Left cardiac atrium (tissue), 4 donors: ENCODE measurements at regions of chr2 and their contacts with region 1.

Region 1: DNA sequence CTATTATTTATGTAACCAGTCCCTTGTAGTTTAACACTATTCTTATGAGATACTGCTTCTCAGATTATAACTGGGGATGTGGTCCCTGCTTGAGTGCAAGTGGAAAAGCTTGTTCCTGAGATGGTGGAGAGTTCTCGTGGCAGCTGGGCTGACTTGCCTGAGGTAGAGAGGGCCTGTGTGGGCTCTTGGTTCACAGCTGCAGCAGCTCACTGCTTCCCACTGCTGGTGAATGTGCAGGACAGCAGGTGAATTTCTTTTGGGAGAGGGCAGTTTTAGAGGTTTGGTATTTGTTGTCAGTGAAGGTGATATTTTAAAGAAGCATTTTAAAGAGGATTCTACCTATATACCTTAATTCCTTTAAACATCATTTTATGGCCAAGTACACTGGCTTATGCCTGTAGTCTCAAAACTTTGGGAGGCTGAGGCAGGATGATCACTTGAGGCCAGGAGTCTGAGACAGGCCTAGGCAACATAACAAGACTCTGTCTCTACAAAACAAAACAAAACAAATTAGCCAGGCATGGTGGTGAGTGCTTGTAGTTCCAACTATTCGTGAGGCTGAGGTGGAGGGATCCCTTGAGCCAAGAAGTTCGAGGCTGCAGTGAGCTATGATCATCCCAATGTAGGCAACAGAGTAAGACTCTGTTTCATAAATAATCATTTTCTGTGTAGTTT is 94.8 kb downstream of the MTA3 start:
- DNase-seq: peak; percentile 70
- ATAC-seq: peak; percentile 82 to 91

Region 2: DNA sequence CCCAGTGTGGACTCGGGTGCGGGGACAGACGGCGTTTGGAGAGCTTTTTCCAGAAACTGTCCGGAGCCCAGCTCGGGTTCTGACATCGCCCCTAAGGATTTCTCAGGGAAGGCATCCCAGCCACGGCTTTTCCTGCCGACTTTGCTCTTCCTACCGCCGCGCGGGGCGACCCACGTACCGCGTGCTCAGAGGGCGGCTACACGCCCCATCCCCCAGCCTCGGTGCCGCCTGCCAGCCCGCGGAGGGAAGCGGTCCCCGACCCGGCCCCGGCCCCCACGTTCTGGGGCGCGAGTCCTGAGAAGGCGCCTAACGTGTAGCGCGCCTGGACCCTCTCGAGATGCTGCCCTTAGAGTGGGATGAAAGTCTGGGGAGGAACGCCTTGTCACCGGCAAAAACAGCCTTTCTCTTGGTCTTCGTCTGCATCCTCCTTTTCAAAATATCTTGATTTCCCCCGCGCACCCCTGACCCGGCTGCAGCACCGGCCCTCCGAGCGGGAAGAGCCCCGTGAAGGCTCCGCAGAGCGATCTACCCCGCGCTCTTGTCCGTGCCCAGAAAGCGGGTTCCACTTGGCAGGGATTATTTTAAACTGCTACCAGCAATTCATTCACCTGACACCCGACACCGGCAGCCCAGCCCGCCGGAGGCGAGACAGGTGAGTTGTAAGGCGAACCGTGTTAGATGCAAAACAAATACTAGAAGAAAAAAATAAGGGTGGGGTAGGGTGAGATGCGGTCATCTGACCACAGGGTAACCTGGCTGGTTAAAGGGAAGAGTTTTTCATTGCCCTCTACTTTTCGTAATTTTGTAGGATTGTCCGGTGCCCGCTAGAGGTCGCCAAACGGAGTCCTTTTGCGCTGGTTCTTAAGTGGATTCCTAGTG is 168.6 kb before region 1 on chr2:
- intact Hi-C with region 1: loop called in 1 of 2 experiments (anchors 2 kb)
- DNase-seq: peak; percentile 61
- ATAC-seq: peak; percentile 68 to 79

Region 3: DNA sequence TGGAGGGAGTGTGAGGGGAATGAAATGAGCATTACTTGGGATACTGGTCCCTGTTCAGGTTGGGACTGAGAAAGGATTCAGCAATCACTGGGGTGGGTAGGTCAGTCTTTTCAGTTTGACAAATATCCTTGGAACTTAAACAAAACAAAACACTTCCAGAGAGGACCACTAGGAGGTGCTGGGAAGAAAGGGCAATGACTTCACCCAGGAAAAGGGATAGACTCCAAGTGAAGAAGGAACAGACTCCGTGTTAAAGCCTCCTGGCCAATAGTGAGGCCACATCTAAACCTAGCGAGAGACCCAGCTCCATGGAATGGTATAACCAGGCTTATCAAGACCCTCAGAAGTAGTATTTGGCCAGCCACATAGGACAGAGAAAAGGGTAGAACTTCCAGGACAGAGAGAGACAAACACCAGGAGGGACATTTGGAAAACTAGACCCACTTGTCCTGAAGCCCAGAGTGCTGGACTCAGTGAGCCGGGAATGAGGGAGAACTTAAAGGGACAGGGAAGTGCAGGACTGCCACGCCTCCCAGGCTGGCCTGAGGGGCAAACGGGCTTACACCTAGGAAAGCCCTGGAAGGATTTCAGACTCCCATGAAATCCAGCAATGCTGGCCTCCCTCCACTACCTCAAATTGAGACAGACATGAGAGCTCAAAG is 149.9 kb before region 1 on chr2:
- intact Hi-C with region 1: loop called (anchors 5 kb)
- DNase-seq: no peak
- ATAC-seq: peak in 1 of 2 donors; percentile 58

Region 4: GRCh38 chr2:42696987-42697386 is 33.7 kb after region 1 on chr2:
- intact Hi-C with region 1: no loop called
- DNase-seq: no peak
- ATAC-seq: no peak